ENCODE measurements at regions of chr10 and their contacts with region 1.

Region 1: GRCh38 chr10:95792874-95793285 is 36.9 kb downstream of the ENTPD1 start:
- DNase-seq: no peak
- H3K4me3 Mint-ChIP-seq: no peak overlapping the region
- H3K27ac Mint-ChIP-seq: peak overlapping the region; percentile 54
- H3K4me1 Mint-ChIP-seq: peaks cover 53% of the 10 kb centered on the region
- H3K27me3 Mint-ChIP-seq: no peaks in the 10 kb centered on the region

Region 2: DNA sequence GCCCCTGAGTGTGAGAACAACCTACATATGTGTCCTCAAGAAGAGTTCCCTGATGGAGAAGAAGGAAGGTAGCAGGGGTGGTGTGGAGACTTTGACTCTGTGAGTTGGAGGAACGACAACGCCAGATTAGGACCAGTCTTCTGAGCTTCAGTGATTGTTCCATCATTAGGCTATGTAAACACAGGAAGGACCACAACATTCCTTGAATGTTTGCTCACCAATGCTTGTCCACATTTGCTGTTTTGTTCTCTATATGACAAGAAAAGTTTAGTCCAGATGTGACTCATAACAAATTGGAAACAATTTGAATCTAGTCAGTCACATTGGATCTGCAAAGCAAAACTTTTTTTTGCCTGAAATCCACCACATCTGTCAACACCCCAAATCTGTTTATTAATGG is 25.8 kb after region 1 on chr10:
- intact Hi-C with region 1: loop called (anchors 2 kb)
- DNase-seq: no peak
- H3K4me3 Mint-ChIP-seq: no peak overlapping the region
- H3K27ac Mint-ChIP-seq: peak overlapping the region; percentile 72
- H3K4me1 Mint-ChIP-seq: peaks cover 37% of the 10 kb centered on the region
- H3K27me3 Mint-ChIP-seq: no peaks in the 10 kb centered on the region

Region 3: DNA sequence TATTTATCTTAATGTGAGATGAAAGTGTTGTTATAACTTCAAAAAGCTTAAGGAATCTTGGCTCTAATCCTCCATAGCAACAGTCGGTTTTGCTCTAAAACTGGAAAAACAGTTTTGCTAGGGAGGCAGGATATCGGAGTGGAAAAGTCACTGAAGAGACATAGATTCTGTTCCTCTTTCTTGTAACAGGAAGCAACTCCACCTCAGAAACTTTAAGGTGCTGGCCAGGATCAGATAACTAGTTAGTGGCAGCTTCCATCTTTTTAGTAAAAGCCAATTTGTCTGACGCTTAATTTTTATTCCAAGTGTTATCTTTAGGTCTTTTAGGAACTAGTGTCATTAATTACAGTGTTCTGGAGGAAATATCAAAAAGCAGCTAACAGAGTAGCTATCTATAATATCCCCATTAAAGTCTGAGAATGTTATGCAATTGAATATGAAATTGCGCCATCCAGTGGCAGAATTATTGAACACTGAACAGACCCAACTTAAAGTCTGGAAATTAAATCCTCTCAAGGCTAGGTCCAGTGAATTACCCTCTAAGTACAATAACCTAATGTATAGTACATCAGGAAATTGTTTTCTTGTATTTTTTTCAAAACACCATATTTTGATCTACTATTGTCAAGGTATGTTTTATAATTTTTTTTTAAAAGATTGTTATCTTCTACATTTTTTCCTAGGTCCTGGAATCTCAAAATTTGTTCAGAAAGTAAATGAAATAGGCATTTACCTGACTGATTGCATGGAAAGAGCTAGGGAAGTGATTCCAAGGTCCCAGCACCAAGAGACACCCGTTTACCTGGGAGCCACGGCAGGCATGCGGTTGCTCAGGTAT is 49.0 kb after region 1 on chr10:
- intact Hi-C with region 1: no loop called
- DNase-seq: peak; percentile 85
- H3K4me3 Mint-ChIP-seq: peak overlapping the region; percentile 45
- H3K27ac Mint-ChIP-seq: peak overlapping the region; percentile 78
- H3K4me1 Mint-ChIP-seq: peaks cover 42% of the 10 kb centered on the region
- H3K27me3 Mint-ChIP-seq: no peaks in the 10 kb centered on the region

Region 4: GRCh38 chr10:95987685-95988426 is 195.0 kb after region 1 on chr10:
- intact Hi-C with region 1: no loop called
- DNase-seq: no peak
- H3K4me3 Mint-ChIP-seq: no peak overlapping the region
- H3K27ac Mint-ChIP-seq: no peak overlapping the region
- H3K4me1 Mint-ChIP-seq: no peaks in the 10 kb centered on the region
- H3K27me3 Mint-ChIP-seq: peaks cover 16% of the 10 kb centered on the region

Measured in activated CD4-positive, alpha-beta T cell treated with anti-CD3 and anti-CD28 coated beads, Interleukin-2, amount 10 ng/mL, durations not matched to agents 24 days and 14 days (primary cell).